ENCODE measurements at regions of chr12 and their contacts with region 1.

Region 1: DNA sequence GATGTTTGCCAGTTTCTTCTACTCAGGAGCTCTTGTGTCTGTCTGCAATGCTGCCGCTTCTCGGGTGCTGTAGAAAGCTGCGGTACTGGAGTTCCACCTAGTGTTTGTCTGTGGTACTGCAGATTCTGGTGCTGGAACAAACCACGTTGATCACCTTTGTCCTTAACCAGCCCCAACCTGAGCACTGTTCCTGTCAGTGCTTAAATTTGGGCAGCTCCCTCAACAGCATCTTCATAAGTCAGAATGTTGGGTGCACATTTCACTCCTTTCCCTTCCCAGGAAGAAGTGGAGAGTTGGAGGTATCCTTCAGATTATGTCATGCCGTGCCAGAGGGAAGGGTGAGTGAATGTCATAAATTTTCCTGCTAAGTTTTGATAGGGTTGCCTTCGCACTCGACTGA is 48.7 kb upstream of the LALBA start:
- DNase-seq: peak; percentile 78
- H3K4me3 Mint-ChIP-seq: no peak overlapping the region
- H3K27ac Mint-ChIP-seq: no peak overlapping the region
- H3K4me1 Mint-ChIP-seq: no peaks in the 10 kb centered on the region
- H3K27me3 Mint-ChIP-seq: peaks cover 35% of the 10 kb centered on the region

Region 2: GRCh38 chr12:48388430-48388829 is 230.1 kb before region 1 on chr12:
- CTCF ChIA-PET with region 1: no interaction called
- POLR2A ChIA-PET with region 1: no interaction called
- DNase-seq: no peak
- H3K4me3 Mint-ChIP-seq: no peak overlapping the region
- H3K27ac Mint-ChIP-seq: no peak overlapping the region
- H3K4me1 Mint-ChIP-seq: no peaks in the 10 kb centered on the region
- H3K27me3 Mint-ChIP-seq: peaks cover 16% of the 10 kb centered on the region

Region 3: GRCh38 chr12:48542300-48542928 is 76.1 kb before region 1 on chr12:
- CTCF ChIA-PET with region 1: interaction called, 101 read pairs
- POLR2A ChIA-PET with region 1: no interaction called
- DNase-seq: peak; percentile 60
- H3K4me3 Mint-ChIP-seq: no peak overlapping the region
- H3K27ac Mint-ChIP-seq: no peak overlapping the region
- H3K4me1 Mint-ChIP-seq: peaks cover 3% of the 10 kb centered on the region
- H3K27me3 Mint-ChIP-seq: peaks cover 2% of the 10 kb centered on the region

Region 4: GRCh38 chr12:48671231-48671856 is 52.8 kb after region 1 on chr12:
- CTCF ChIA-PET with region 1: no interaction called
- POLR2A ChIA-PET with region 1: no interaction called
- DNase-seq: no peak
- H3K4me3 Mint-ChIP-seq: no peak overlapping the region
- H3K27ac Mint-ChIP-seq: no peak overlapping the region
- H3K4me1 Mint-ChIP-seq: peaks cover 8% of the 10 kb centered on the region
- H3K27me3 Mint-ChIP-seq: no peaks in the 10 kb centered on the region

Region 5: DNA sequence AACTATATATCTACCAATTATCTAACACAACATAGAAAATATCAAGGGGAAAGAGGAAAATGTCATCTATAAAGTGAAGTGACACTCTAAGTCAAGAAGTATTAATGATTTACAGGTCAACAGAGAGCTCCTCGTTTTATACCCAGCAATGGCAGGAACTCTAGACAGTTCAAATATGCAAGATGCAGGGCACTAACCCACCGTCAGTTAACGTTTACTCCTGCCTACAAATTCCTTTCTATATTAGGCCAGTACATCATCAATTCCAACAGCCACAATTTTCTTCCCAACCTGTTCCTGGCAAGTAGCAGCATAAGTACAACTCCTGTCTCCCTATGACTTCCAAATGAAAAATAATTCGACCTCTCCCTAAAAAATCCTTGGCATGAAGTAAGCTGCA is 72.4 kb after region 1 on chr12:
- CTCF ChIA-PET with region 1: no interaction called
- POLR2A ChIA-PET with region 1: no interaction called
- DNase-seq: no peak
- H3K4me3 Mint-ChIP-seq: no peak overlapping the region
- H3K27ac Mint-ChIP-seq: no peak overlapping the region
- H3K4me1 Mint-ChIP-seq: peaks cover 18% of the 10 kb centered on the region
- H3K27me3 Mint-ChIP-seq: no peaks in the 10 kb centered on the region

Measured in activated CD4-positive, alpha-beta memory T cell treated with anti-CD3 and anti-CD28 coated beads, Interleukin-2, amount 10 ng/mL, durations not matched to agents 7 days and 5 days (primary cell).